A549 (cell line): ENCODE measurements at regions of chr17 and their contacts with region 1.

Region 1: DNA sequence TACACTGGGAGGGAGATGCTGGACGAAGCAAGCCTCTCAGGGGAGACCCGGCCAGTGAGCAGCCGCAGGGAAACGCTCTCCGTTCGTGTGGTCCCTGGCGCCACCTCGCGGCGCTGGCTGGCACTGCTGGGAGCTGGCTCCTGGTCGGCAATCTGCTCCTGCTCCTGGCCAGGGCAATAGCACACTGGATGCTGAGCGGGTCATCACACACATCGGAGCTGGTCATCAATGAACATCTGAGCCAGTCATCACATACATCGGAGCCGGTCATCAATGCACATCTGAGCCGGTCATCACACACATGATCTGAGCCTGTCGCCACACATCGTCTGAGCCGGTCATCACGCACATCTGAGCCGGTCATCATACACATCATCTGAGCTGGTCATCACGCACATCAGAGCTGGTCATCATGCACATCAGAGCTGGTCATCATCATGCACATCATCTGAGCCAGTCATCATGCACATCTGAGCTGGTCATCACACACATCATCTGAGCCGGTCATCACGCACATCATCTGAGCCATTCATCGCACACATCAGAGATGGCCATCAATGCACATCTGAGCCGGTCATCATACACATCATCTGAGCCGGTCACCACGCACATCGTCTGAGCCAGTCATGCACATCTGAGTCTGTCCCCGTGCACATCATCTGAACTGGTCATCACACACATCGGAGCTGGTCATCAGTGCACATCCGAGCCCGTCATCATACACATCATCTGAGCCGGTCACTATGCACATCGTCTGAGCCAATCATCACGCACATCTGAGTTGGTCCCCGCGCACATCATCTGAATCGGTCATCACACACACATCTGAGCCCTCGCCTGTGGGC is 217.3 kb downstream of the RBFOX3 start:
- DNase-seq: peak; percentile 69 to 89
- ATAC-seq: peak; percentile 63 to 87
- H3K4me3 ChIP-seq: no peak overlapping the region
- H3K27ac ChIP-seq: no peak overlapping the region
- H3K4me1 ChIP-seq: no peaks in the 10 kb centered on the region
- CTCF ChIP-seq: peak; percentile 83
- EP300 ChIP-seq: no peak
- POLR2A ChIP-seq: no peak
- RAD21 ChIP-seq: peak; percentile 84 to 95

Region 2: DNA sequence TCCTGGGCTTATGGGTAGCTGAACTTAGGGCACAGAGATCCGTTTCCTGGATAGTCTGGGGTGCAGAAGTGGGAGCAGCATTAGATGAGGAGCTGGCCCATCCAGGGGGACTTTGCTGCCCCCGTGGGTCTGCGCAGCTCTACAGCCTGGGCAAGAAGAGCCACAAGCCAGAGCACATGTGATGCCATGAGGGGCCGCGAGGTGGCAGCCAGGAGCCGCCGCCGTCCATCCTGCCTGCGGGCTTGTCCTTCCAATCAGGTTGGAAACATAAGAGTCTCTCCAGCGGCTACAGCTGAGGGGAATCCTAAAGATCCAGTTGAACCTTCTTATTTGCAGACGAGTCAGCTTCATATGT is 347.8 kb before region 1 on chr17:
- CTCF ChIA-PET with region 1: interaction called, 67 read pairs
- POLR2A ChIA-PET with region 1: no interaction called
- DNase-seq: peak; percentile 78 to 89
- ATAC-seq: peak; percentile 73 to 88
- H3K4me3 ChIP-seq: no peak overlapping the region
- H3K27ac ChIP-seq: no peak overlapping the region
- H3K4me1 ChIP-seq: peaks cover 6% of the 10 kb centered on the region; the same call in 2 of the 3 replicates
- CTCF ChIP-seq: peak; percentile 92
- EP300 ChIP-seq: no peak
- POLR2A ChIP-seq: no peak
- RAD21 ChIP-seq: peak; percentile 83

Region 3: DNA sequence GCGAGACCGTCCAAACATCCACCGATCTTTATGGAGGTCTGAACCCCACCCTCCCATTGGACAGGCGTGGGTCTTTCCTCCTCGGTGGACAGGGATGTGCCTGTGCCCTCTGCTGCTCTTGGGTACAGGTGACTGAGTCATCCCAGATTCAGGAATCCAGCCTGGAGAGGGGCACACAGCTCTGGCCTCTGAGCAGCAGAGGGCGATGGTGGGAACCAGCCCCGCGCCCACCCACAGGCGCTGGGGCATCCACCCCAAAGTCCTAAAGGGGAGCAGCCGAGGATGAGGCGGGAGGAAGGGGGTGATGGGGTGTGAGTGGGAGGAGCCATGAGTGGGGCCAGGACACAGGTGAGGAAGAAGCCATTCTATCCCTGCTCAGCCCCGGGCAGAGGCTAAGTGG is 284.0 kb before region 1 on chr17:
- CTCF ChIA-PET with region 1: interaction called, 67 read pairs
- POLR2A ChIA-PET with region 1: no interaction called
- DNase-seq: peak in 1 of 2 experiments; percentile 50
- ATAC-seq: peak in 1 of 2 experiments; percentile 74; a peak in 3 of 6 replicates
- H3K4me3 ChIP-seq: no peak overlapping the region
- H3K27ac ChIP-seq: no peak overlapping the region
- H3K4me1 ChIP-seq: no peaks in the 10 kb centered on the region
- CTCF ChIP-seq: peak; percentile 50
- EP300 ChIP-seq: no peak
- POLR2A ChIP-seq: no peak
- RAD21 ChIP-seq: peak; percentile 22 to 41; a peak in 2 of 5 replicates

Region 4: DNA sequence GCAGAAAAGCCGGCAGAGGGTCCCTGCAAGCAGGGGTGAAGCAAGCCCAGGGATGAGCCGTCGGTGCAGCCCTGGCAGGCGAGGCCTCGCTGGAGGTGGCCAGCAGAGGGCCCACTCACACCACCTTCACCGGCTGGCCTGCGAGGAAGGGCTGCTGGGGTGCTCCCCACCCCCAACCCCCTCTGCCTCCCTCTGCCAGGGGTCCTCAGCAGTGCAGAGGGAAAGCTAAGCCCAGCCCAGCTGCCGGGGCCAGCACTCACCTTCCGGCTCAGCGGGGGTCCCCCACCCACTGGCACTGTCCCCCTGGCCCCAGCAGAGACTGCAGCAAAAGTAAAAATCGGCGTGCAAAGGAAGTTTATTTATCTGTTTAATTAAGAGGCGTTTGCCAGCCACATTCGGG is 205.5 kb before region 1 on chr17:
- CTCF ChIA-PET with region 1: interaction called, 390 read pairs
- POLR2A ChIA-PET with region 1: interaction called, 3 read pairs
- DNase-seq: peak; percentile 50 to 88
- ATAC-seq: peak; percentile 57 to 79; a peak in 4 of 6 replicates
- H3K4me3 ChIP-seq: no peak overlapping the region
- H3K27ac ChIP-seq: no peak overlapping the region
- H3K4me1 ChIP-seq: no peaks in the 10 kb centered on the region; the same call in 2 of the 3 replicates
- CTCF ChIP-seq: peak; percentile 88
- EP300 ChIP-seq: no peak
- POLR2A ChIP-seq: no peak
- RAD21 ChIP-seq: peak; percentile 82 to 94

Region 5: GRCh38 chr17:79322211-79323123 is 71.1 kb before region 1 on chr17:
- CTCF ChIA-PET with region 1: interaction called, 14 read pairs
- POLR2A ChIA-PET with region 1: no interaction called
- DNase-seq: no peak
- ATAC-seq: no peak
- H3K4me3 ChIP-seq: no peak overlapping the region
- H3K27ac ChIP-seq: no peak overlapping the region
- H3K4me1 ChIP-seq: no peaks in the 10 kb centered on the region
- CTCF ChIP-seq: no peak
- EP300 ChIP-seq: no peak
- POLR2A ChIP-seq: no peak
- RAD21 ChIP-seq: no peak

Region 6: GRCh38 chr17:79612468-79613194 is 219.1 kb after region 1 on chr17:
- CTCF ChIA-PET with region 1: interaction called, 88 read pairs
- POLR2A ChIA-PET with region 1: no interaction called
- DNase-seq: peak; percentile 92 to 94
- ATAC-seq: peak; percentile 67 to 89
- H3K4me3 ChIP-seq: no peak overlapping the region
- H3K27ac ChIP-seq: peak overlapping the region; percentile 88 to 95
- H3K4me1 ChIP-seq: peaks cover 37% of the 10 kb centered on the region
- CTCF ChIP-seq: peak; percentile 97
- EP300 ChIP-seq: no peak
- POLR2A ChIP-seq: no peak
- RAD21 ChIP-seq: peak; percentile 96 to 97